Activated T-helper 1 cell treated with anti-CD3 and anti-CD28 coated beads, Interleukin-12 subunit alpha, Interleukin-12 subunit beta, Interleukin-2, Interleukin-4 antibody, amounts not matched to agents 30 ng/mL and 10 ng/mL and 1 ng/mL, durations not matched to agents 14 hours and 24 hours and 36 hours (primary cell): ENCODE measurements at regions of chr19 and their contacts with region 1.

Region 1: DNA sequence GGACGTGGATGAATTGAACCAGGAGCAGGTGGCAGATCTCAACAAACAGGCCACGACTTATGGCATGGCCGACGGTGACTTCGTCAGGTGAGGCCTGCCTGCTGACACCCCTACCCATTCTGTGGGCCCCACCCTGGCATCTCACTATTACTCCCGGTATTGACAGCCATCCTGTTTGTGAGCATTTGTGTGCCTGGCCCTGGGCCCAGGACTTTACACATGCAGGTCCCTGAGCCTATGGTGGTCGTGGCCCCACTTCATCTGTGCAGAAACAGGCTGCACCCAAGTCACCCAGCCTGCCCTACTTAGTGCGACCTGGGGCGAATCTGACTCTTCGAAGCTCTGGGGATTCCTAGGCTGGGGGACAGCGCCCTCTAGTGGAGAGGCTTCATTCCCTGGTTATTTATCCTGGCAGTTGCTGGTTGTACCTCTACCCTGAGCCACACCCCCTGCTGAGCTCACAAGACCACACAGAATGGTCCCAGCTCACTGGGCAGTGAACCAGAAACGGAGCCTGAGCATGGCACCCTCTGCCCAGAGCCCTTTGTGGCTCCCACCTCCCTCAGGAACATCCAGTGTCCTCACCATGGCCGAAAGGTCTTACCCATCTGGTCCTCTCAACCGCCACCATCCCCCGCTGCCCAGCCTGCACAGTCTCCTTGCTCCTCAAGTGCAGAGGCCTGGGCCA is 16.9 kb downstream of the ZNF296 start:
- DNase-seq: peak; percentile 73
- H3K4me3 Mint-ChIP-seq: no peak overlapping the region
- H3K27ac Mint-ChIP-seq: peak overlapping the region; percentile 63
- H3K4me1 Mint-ChIP-seq: peaks cover 5% of the 10 kb centered on the region
- H3K27me3 Mint-ChIP-seq: no peaks in the 10 kb centered on the region

Region 2: GRCh38 chr19:44903602-44904425 is 155.6 kb before region 1 on chr19:
- intact Hi-C with region 1: loop called (anchors 5 kb)
- DNase-seq: peak; percentile 54
- H3K4me3 Mint-ChIP-seq: no peak overlapping the region
- H3K27ac Mint-ChIP-seq: no peak overlapping the region
- H3K4me1 Mint-ChIP-seq: peaks cover 8% of the 10 kb centered on the region
- H3K27me3 Mint-ChIP-seq: peaks cover 16% of the 10 kb centered on the region

Region 3: DNA sequence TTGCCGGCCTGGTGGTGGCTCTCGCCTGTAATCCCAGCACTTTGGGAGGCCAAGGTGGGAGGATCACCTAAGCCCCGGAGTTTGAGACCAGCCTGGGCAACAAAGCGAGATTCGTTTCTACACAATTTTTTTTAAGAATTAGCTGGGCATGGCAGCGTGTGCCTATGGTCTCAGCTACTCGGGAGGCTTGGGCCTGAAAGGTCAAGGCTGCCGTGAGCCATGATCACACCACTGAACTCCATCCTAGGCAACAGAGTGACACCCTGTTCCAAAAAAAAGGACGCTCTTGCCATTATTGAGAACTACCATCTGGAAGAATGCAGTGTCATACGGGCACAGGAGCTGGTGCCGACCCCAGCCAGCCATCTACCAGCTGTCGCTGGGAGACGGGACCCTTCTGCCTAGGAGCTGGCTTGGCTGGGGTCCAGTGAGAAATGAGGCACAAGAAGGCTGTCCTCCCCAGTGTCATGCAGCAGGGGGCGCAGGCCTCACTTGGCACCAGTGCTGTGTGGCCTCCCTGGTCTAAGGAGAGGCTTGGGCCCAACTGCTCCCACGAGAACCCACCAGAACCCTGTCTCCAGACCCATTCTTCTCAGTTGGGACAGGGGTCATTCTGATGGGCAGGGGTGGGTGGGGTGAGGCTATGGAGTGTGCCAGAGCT is 70.4 kb before region 1 on chr19:
- intact Hi-C with region 1: loop called (anchors 1 kb)
- DNase-seq: peak; percentile 32
- H3K4me3 Mint-ChIP-seq: no peak overlapping the region
- H3K27ac Mint-ChIP-seq: peak overlapping the region; percentile 65
- H3K4me1 Mint-ChIP-seq: no peaks in the 10 kb centered on the region
- H3K27me3 Mint-ChIP-seq: no peaks in the 10 kb centered on the region

Region 4: DNA sequence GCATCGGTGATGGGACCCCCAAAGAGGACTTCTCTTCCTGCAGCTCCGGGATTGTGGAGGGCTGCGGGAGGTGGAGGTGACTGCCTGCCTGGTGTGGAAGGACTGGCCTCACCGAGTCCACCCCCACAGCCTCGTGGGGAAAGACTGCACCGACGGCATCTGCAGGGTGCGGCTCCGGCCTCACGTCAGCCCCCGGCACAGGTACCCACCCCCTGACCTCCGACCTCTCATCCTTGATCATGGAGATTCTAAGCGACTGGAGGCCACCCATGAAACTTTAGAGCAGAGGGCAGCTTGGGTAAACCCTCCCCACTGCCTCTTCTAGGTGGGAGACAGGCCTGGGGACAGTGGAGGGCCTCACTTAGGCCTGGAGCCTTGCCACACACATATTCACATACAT is 37.4 kb before region 1 on chr19:
- intact Hi-C with region 1: no loop called
- DNase-seq: no peak
- H3K4me3 Mint-ChIP-seq: no peak overlapping the region
- H3K27ac Mint-ChIP-seq: no peak overlapping the region
- H3K4me1 Mint-ChIP-seq: peaks cover 2% of the 10 kb centered on the region
- H3K27me3 Mint-ChIP-seq: no peaks in the 10 kb centered on the region

Region 5: GRCh38 chr19:45187421-45188100 is 128.1 kb after region 1 on chr19:
- intact Hi-C with region 1: loop called (anchors 1 kb)
- DNase-seq: no peak
- H3K4me3 Mint-ChIP-seq: no peak overlapping the region
- H3K27ac Mint-ChIP-seq: no peak overlapping the region
- H3K4me1 Mint-ChIP-seq: no peaks in the 10 kb centered on the region
- H3K27me3 Mint-ChIP-seq: peaks cover 2% of the 10 kb centered on the region